ENCODE measurements at regions of chr14 and their contacts with region 1.

Region 1: DNA sequence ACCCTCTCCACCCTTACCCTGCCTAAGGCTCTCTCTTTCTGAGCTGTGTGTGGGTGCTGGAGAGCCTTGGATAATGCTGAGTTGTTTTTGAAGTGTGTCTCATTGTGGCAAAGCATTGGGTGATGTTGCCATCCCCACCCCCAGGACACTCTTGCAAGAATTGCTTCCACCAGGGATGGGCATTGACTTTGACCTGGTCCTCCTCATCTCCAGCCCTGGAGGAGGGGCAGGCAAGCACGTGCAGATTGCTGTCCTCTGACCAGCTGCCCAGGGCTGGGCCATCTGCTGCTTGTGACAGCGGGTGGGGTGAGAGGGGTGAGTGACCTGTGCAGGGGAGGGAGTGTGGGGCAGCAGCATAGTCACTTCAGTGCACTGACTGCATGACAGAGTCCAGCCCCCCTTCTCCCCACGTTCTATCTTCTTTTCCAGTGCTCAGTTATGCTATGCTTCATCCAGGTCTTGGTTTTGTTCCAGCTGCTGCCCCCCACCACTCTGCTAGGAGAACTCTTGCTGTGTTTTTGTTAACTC is 26.2 kb downstream of the SUSD6 start:
- DNase-seq: no peak
- H3K4me3 Mint-ChIP-seq: peak overlapping the region; percentile 52
- H3K27ac Mint-ChIP-seq: peak overlapping the region; percentile 96
- H3K4me1 Mint-ChIP-seq: peaks cover 76% of the 10 kb centered on the region
- H3K27me3 Mint-ChIP-seq: no peaks in the 10 kb centered on the region

Region 2: GRCh38 chr14:68607081-68607886 is 1030.3 kb before region 1 on chr14:
- intact Hi-C with region 1: no loop called
- DNase-seq: no peak
- H3K4me3 Mint-ChIP-seq: no peak overlapping the region
- H3K27ac Mint-ChIP-seq: no peak overlapping the region
- H3K4me1 Mint-ChIP-seq: peaks cover 9% of the 10 kb centered on the region
- H3K27me3 Mint-ChIP-seq: no peaks in the 10 kb centered on the region

Region 3: GRCh38 chr14:69625299-69626131 is 12.1 kb before region 1 on chr14:
- intact Hi-C with region 1: loop called (anchors 1 kb)
- DNase-seq: peak; percentile 75
- H3K4me3 Mint-ChIP-seq: peak overlapping the region; percentile 76
- H3K27ac Mint-ChIP-seq: peak overlapping the region; percentile 92
- H3K4me1 Mint-ChIP-seq: peaks cover 94% of the 10 kb centered on the region
- H3K27me3 Mint-ChIP-seq: no peaks in the 10 kb centered on the region

Region 4: GRCh38 chr14:69660344-69661193 is 23.0 kb after region 1 on chr14:
- intact Hi-C with region 1: loop called (anchors 1 kb)
- DNase-seq: no peak
- H3K4me3 Mint-ChIP-seq: peak overlapping the region; percentile 43
- H3K27ac Mint-ChIP-seq: peak overlapping the region; percentile 85
- H3K4me1 Mint-ChIP-seq: peaks cover 87% of the 10 kb centered on the region
- H3K27me3 Mint-ChIP-seq: no peaks in the 10 kb centered on the region

Region 5: DNA sequence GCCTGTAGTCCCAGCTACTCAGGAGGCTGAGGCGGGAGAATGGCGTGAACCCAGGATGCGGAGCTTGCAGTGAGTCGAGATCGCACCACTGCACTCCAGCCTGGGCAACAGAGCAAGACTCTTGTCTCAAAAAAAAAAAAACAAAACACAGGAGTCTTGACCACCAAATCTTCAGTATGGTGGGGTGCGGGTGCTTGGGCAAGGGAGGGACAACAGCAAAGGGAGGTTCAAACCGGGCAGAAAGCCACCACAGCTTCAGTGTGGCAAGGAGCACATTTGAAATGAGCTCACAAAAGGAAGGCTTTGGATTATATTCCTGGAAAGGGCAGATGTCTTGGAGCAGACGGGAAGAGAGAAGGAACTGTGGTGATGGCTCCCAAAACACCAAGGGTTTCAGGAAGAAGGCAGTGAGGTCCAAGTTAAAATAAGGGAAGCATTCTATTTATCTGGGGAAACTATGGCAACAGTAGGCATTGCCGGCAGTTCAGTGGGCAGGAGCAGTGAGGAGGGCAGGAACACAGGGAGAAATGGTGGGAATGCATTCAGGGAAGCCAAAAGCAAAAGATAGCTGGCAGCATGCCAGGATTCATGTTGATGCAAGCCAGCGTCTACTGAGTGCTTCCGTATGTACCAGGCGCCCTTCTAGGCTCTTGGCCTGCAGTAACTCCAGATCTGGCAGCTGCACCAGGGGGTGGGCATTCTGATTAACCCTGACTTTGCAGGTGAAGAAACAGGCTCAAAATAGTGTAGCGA is 78.3 kb after region 1 on chr14:
- intact Hi-C with region 1: loop called (anchors 1 kb)
- DNase-seq: no peak
- H3K4me3 Mint-ChIP-seq: peak overlapping the region; percentile 46
- H3K27ac Mint-ChIP-seq: peak overlapping the region; percentile 92
- H3K4me1 Mint-ChIP-seq: peaks cover 94% of the 10 kb centered on the region
- H3K27me3 Mint-ChIP-seq: no peaks in the 10 kb centered on the region

Region 6: DNA sequence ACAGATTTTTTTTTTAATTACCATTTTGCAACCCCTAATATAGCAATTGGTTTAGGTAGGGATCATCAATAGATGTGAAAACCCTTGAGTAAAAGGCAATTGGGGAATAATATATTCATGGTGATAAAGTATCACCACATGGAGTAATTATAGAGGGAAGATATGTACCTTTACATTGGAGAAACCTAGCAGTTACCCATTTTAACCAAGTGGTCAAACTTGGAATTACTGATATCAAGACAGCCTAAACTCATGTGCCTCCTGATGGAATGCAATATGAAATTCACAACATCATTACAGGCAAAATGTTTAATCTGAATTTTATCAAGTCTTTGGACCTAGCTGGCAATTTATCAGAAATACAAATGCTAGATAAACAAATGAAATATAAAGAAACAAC is 166.2 kb after region 1 on chr14:
- intact Hi-C with region 1: no loop called
- DNase-seq: no peak
- H3K4me3 Mint-ChIP-seq: no peak overlapping the region
- H3K27ac Mint-ChIP-seq: no peak overlapping the region
- H3K4me1 Mint-ChIP-seq: no peaks in the 10 kb centered on the region
- H3K27me3 Mint-ChIP-seq: peaks cover 25% of the 10 kb centered on the region